ENCODE measurements at regions of chr16 and their contacts with region 1.

Region 1: DNA sequence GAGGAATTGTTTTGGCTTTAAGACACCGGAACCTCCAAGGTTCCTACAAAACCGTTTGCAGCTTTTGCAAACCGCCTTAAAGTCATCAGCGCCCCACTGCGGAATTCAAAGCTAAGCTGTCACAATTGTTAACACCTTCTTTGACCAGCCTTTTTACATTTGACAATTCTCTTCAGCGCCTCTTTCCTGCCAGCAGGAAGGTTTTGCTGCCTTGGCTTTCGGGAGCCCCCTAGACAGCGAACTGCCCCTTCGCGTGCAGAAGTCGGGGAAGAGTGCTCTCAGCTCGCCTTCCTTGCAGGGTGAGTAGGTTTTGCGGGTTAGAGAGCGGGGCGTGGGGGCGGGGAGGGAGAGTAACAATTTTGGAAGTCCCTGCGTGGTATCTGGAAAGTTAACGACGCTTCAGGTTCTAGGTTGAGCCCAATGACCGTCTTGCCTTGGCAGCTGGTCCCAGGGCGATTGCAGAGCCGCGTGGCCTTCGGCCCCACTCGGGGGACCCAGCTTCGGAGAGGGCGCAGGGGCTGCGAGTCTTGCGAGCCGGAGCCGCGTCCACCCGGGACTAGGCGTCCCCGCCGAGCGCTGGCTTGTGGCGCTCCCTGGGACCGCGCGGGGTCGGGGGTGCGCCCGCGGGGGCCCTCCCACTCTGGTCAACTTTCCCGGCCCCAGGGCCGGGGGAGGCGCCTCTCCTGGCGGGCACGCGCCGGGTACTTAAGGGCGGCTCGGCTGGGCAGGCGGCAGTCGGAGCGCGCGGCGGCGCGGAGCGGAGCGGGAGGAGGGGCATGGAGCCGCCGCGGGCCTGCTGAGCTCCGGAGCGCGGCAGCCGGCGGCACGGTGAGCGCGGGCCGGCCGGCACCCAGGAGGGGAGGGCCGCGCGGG is at the start of gene HAS3:
- DNase-seq: peak; percentile 64 to 81
- H3K4me3 ChIP-seq: peak within 1 kb of the TSS; percentile 60 to 82 (median 75)
- H3K27ac ChIP-seq: no peak within 1 kb of the TSS
- H3K4me1 ChIP-seq: peaks cover 15 to 33% (median 19%) of the 10 kb centered on the region in 4 experiments
- H3K27me3 ChIP-seq: no peaks in the 10 kb centered on the region; a peak in 1 of 7 replicates
- CTCF ChIP-seq: peak in 2 of 3 experiments; percentile 48 to 49; a peak in 3 of 4 replicates
- EP300 ChIP-seq: no peak
- POLR2A ChIP-seq: peak; percentile 16 to 71; a peak in 2 of 3 replicates
- RAD21 ChIP-seq: peak; percentile 65 to 76
- total RNA-seq, gene HAS3: 64.4 and 69.6 TPM in 2 replicates

Region 2: DNA sequence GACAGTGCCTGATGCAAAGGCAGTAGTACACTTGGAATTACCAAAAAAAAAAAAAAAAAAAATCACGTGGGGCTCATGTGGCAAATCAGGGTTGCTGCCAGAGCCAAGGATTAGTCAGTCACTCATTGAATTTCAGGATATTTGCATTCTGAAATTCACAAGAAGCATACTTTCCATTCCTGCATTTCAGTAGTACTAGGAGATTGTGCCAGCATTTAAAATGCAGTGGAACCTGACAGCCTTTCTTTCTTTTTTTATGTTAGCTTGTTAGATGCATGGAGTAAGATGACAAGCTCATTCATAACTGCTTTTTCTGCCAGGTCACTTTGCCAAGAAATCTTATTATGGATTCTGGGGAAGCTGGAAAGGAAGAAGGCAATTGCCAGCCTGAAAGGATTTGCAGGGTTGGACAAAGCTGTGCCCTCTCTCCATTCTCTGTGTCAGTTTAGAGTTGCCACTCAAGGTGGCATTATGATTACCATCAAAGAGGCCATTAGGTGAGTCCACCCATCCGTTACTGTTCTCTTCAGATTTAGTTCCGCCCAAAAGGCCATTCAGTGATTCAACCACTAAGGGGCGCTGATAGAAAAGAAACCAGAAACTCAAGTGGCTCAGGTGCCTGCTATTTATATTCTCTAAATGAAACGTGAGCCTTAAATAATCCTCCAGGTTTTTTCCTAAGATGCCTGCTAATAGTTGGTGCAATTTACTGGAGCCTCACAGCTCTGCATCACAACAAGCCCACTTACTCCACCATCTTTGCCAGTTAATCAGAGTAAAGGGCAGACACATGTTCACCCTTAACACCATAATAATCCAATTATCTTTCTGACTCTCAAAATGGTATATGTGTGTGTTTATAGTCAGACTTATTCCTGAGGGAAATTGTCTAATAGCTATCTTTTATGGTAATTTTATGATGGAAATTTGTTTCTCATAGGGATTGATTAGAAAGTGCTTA is 203.4 kb before region 1 on chr16:
- CTCF ChIA-PET with region 1: interaction called, 15 read pairs
- POLR2A ChIA-PET with region 1: no interaction called
- DNase-seq: peak in 1 of 2 experiments; percentile 63
- H3K4me3 ChIP-seq: no peak overlapping the region
- H3K27ac ChIP-seq: no peak overlapping the region
- H3K4me1 ChIP-seq: 0 out of 7 replicates have a peak, but pooled peaks cover 0 to 1% (median 0%) of the 10 kb centered on the region in 4 experiments
- H3K27me3 ChIP-seq: no peaks in the 10 kb centered on the region
- CTCF ChIP-seq: peak in 2 of 3 experiments; percentile 74 to 86; a peak in 3 of 4 replicates
- EP300 ChIP-seq: no peak
- POLR2A ChIP-seq: no peak
- RAD21 ChIP-seq: peak; percentile 96 to 98

Region 3: GRCh38 chr16:68987734-68988457 is 117.8 kb before region 1 on chr16:
- CTCF ChIA-PET with region 1: interaction called, 30 read pairs
- POLR2A ChIA-PET with region 1: interaction called, 23 read pairs
- DNase-seq: no peak
- H3K4me3 ChIP-seq: no peak overlapping the region
- H3K27ac ChIP-seq: no peak overlapping the region
- H3K4me1 ChIP-seq: peaks cover 0 to 9% (median 5%) of the 10 kb centered on the region in 4 experiments; a peak in 2 of 7 replicates
- H3K27me3 ChIP-seq: no peaks in the 10 kb centered on the region
- CTCF ChIP-seq: no peak
- EP300 ChIP-seq: no peak
- POLR2A ChIP-seq: no peak
- RAD21 ChIP-seq: no peak; a peak in 1 of 4 replicates

Region 4: GRCh38 chr16:69073161-69073669 is 32.5 kb before region 1 on chr16:
- CTCF ChIA-PET with region 1: interaction called, 7 read pairs
- POLR2A ChIA-PET with region 1: interaction called, 25 read pairs
- DNase-seq: no peak
- H3K4me3 ChIP-seq: 0 out of 8 replicates have a peak overlapping the region, but pooled peaks of 1 of the 4 experiments have one; percentile 23
- H3K27ac ChIP-seq: no peak overlapping the region
- H3K4me1 ChIP-seq: peaks cover 6 to 28% (median 26%) of the 10 kb centered on the region in 4 experiments
- H3K27me3 ChIP-seq: no peaks in the 10 kb centered on the region
- CTCF ChIP-seq: no peak
- EP300 ChIP-seq: no peak
- POLR2A ChIP-seq: no peak
- RAD21 ChIP-seq: no peak

Region 5: GRCh38 chr16:69089091-69089910 is 16.4 kb before region 1 on chr16:
- CTCF ChIA-PET with region 1: interaction called, 8 read pairs
- POLR2A ChIA-PET with region 1: interaction called, 15 read pairs
- DNase-seq: no peak
- H3K4me3 ChIP-seq: no peak overlapping the region
- H3K27ac ChIP-seq: no peak overlapping the region
- H3K4me1 ChIP-seq: peaks cover 9 to 17% (median 10%) of the 10 kb centered on the region in 4 experiments
- H3K27me3 ChIP-seq: no peaks in the 10 kb centered on the region
- CTCF ChIP-seq: no peak
- EP300 ChIP-seq: no peak
- POLR2A ChIP-seq: no peak
- RAD21 ChIP-seq: peak in 1 of 2 experiments; percentile 4; a peak in 1 of 4 replicates

Region 6: GRCh38 chr16:69132424-69133252 is 26.9 kb after region 1 on chr16 and contains the starts of genes CHTF8 and UTP4:
- CTCF ChIA-PET with region 1: interaction called, 174 read pairs
- POLR2A ChIA-PET with region 1: interaction called, 16 read pairs
- DNase-seq: no peak
- H3K4me3 ChIP-seq: peak within 1 kb of the TSS; percentile 90 to 97 (median 94)
- H3K27ac ChIP-seq: peak within 1 kb of the TSS; percentile 94
- H3K4me1 ChIP-seq: peaks cover 2 to 12% (median 7%) of the 10 kb centered on the region in 4 experiments; a peak in 5 of 7 replicates
- H3K27me3 ChIP-seq: no peaks in the 10 kb centered on the region
- CTCF ChIP-seq: no peak
- EP300 ChIP-seq: no peak; a peak in 1 of 3 replicates
- POLR2A ChIP-seq: peak; percentile 76 to 83
- RAD21 ChIP-seq: no peak
- total RNA-seq, gene CHTF8: 138 and 146 TPM in 2 replicates
- total RNA-seq, gene UTP4: 101 TPM in 2 replicates

Region 7: DNA sequence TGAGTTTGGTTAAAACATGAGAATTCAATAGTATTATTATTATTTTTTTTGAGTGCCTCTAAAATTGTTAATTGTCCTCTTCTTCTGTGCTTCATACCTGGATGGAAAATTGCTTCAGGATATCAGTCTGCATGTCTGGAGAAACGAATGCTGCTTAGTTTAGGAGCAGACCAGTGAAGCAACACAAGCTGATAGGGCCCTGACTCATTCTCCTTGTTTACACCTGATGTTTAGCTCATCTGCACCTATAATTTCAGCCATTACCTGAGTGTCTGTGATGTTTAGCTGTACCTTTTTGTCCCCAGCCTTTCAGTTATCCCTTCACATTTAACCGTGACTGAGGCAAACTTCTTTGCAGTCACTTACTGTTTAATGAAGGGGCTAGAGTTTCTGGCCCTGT is 96.1 kb after region 1 on chr16:
- CTCF ChIA-PET with region 1: no interaction called
- POLR2A ChIA-PET with region 1: no interaction called
- DNase-seq: no peak
- H3K4me3 ChIP-seq: no peak overlapping the region
- H3K27ac ChIP-seq: no peak overlapping the region
- H3K4me1 ChIP-seq: no peaks in the 10 kb centered on the region
- H3K27me3 ChIP-seq: no peaks in the 10 kb centered on the region
- CTCF ChIP-seq: no peak
- EP300 ChIP-seq: no peak
- POLR2A ChIP-seq: no peak
- RAD21 ChIP-seq: no peak